GM12878 (cell line): ENCODE measurements at regions of chr12 and their contacts with region 1.

Region 1: DNA sequence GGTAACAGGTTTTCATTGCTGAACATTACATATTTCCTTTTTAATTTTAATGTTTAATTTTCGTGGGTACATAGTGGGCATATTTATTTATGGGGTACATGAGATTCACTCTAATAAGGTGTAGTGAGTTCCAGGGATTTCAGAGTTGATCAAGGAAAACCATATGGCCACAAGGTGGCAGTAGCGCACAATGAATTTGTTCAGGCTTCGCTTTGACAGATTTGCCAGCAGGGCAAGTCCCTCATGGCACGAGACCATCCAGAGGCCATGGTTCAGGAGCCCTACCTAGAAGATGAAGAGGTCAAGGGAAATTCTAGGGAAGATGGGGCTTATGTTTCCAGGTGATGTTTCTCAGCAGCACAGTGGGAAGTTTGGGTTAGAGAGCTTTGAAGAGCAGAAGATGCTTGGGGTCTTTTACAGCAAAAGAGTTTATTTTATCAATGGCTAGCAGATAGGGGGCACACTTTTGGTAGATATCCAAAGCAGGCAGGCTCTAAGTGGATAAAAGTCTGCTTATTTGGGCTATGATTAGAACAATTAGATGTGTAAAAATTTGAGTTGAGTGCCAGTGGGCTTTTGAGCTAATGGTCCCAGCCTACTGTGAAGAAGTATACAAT is 1004.4 kb downstream of the AACS start:
- DNase-seq: no peak
- ATAC-seq: peak; percentile 73
- H3K4me3 ChIP-seq: no peak overlapping the region
- H3K27ac ChIP-seq: no peak overlapping the region
- H3K4me1 ChIP-seq: no peaks in the 10 kb centered on the region
- H3K27me3 ChIP-seq: no peaks in the 10 kb centered on the region
- CTCF ChIP-seq: peak; percentile 45 to 63 (median 61); a peak in 5 of 6 replicates
- EP300 ChIP-seq: no peak
- POLR2A ChIP-seq: no peak
- RAD21 ChIP-seq: peak; percentile 78

Region 2: DNA sequence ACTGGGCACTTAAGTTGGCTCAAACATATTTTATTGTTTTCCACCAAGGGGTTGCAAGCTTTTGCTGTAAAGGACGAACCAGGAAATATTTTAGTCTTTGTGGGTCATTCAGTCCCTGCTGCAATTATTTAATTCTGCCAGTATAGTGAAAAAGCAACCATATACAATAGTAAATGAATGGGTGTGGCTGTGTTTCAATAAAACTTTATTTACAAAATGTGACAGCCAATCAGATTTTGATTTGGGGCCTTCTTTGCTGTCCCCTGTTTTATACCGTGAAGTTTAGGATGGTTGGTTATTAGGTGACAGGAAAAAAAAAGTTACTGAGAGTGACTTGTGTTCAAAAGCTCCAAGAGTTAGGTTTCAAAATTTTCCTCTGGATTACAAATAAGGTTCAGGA is 48.0 kb before region 1 on chr12:
- CTCF ChIA-PET with region 1: no interaction called
- POLR2A ChIA-PET with region 1: no interaction called
- RAD21 ChIA-PET with region 1: no interaction called
- SMC1A ChIA-PET with region 1: no interaction called
- in situ Hi-C with region 1: no loop called
- intact Hi-C with region 1: no loop called
- DNase-seq: no peak
- ATAC-seq: no peak
- H3K4me3 ChIP-seq: no peak overlapping the region
- H3K27ac ChIP-seq: no peak overlapping the region
- H3K4me1 ChIP-seq: no peaks in the 10 kb centered on the region
- H3K27me3 ChIP-seq: no peaks in the 10 kb centered on the region
- CTCF ChIP-seq: no peak
- EP300 ChIP-seq: no peak
- POLR2A ChIP-seq: no peak
- RAD21 ChIP-seq: no peak

Region 3: DNA sequence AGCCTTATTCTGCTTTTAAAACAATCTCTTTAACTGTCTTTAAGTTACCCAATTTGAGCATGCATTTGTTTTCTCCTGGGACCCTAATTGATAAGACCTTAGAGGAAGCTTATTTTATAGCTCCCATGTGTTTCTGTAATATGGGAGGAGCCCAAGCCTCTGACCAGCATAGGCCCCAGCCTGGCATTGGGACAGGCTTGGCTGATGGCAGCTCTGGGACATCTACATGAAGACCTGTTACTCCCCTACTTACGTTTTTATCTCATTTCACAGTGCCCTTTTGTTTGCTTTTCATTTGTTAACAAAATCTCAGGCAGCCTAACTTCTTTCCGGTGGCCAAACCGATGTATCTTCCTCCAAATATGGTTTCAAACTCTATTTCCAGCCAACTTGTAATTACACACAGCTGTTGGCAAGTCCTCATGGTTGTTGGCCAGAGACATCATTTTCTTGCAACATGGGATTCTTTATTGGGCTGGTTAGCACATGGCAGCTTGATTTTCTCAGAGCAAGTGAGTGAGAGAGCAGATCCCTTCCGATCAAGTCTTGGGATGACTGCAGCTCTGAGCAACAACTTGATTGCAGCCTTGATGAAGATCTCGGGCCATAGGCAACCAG is 113.1 kb after region 1 on chr12:
- CTCF ChIA-PET with region 1: no interaction called
- POLR2A ChIA-PET with region 1: no interaction called
- RAD21 ChIA-PET with region 1: no interaction called
- SMC1A ChIA-PET with region 1: no interaction called
- in situ Hi-C with region 1: no loop called
- intact Hi-C with region 1: no loop called
- DNase-seq: no peak
- ATAC-seq: no peak
- H3K4me3 ChIP-seq: no peak overlapping the region
- H3K27ac ChIP-seq: no peak overlapping the region
- H3K4me1 ChIP-seq: no peaks in the 10 kb centered on the region
- H3K27me3 ChIP-seq: no peaks in the 10 kb centered on the region
- CTCF ChIP-seq: no peak
- EP300 ChIP-seq: no peak
- POLR2A ChIP-seq: no peak
- RAD21 ChIP-seq: no peak

Region 4: DNA sequence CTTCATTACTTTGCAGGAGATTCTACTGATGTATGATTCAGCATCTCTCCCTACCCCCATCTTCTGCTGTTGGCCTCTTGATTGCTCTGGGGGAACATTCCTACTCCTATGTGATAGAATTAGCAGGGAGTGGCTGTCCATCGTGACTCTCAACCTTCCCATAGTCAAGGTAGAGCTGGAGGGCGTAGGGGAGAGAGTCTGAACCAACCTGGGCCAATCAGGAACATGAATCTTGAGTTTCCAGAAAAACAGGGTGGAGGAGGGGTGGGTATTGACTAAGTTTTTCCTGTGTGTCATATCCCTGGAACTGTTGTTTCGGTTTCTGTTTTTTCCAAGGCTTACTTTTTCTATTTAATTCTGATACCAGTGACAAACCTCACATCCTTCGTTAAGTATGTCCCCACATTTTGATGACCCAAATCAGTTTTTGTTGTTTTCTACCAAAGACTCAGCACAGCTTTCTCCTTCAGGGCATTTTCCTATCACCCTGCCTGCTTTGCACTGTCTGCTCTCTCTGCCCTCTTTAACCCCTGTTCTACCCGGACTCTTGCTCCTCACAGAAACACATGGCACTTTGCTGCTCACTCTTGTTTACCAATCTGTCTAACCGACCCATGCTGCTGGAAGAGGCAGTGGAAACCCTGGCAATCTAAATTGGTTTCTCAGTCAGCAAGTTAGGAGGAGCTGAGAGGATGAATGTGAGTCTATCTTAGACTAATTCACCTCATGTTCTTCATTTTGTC is 423.9 kb after region 1 on chr12:
- CTCF ChIA-PET with region 1: no interaction called
- POLR2A ChIA-PET with region 1: no interaction called
- RAD21 ChIA-PET with region 1: no interaction called
- SMC1A ChIA-PET with region 1: no interaction called
- in situ Hi-C with region 1: no loop called
- intact Hi-C with region 1: no loop called
- DNase-seq: no peak
- ATAC-seq: no peak
- H3K4me3 ChIP-seq: no peak overlapping the region
- H3K27ac ChIP-seq: no peak overlapping the region
- H3K4me1 ChIP-seq: no peaks in the 10 kb centered on the region
- H3K27me3 ChIP-seq: no peaks in the 10 kb centered on the region
- CTCF ChIP-seq: no peak
- EP300 ChIP-seq: no peak
- POLR2A ChIP-seq: no peak
- RAD21 ChIP-seq: no peak

Region 5: GRCh38 chr12:126747530-126748149 is 678.0 kb after region 1 on chr12:
- CTCF ChIA-PET with region 1: interaction called, 11 read pairs
- POLR2A ChIA-PET with region 1: no interaction called
- RAD21 ChIA-PET with region 1: interaction called, 4 read pairs
- SMC1A ChIA-PET with region 1: interaction called, 6 read pairs
- in situ Hi-C with region 1: no loop called
- intact Hi-C with region 1: loop called (anchors 5 kb)
- DNase-seq: no peak
- ATAC-seq: peak; percentile 73
- H3K4me3 ChIP-seq: no peak overlapping the region
- H3K27ac ChIP-seq: no peak overlapping the region
- H3K4me1 ChIP-seq: no peaks in the 10 kb centered on the region
- H3K27me3 ChIP-seq: no peaks in the 10 kb centered on the region
- CTCF ChIP-seq: peak; percentile 55 to 76 (median 65)
- EP300 ChIP-seq: no peak
- POLR2A ChIP-seq: no peak
- RAD21 ChIP-seq: peak; percentile 40

Region 6: GRCh38 chr12:126874427-126875026 is 804.9 kb after region 1 on chr12:
- CTCF ChIA-PET with region 1: interaction called, 7 read pairs
- POLR2A ChIA-PET with region 1: no interaction called
- RAD21 ChIA-PET with region 1: interaction called, 4 read pairs
- SMC1A ChIA-PET with region 1: interaction called, 3 read pairs
- in situ Hi-C with region 1: loop called (anchors 5 kb)
- intact Hi-C with region 1: loop called (anchors 1 kb)
- DNase-seq: peak; percentile 1
- ATAC-seq: peak; percentile 99
- H3K4me3 ChIP-seq: no peak overlapping the region
- H3K27ac ChIP-seq: no peak overlapping the region
- H3K4me1 ChIP-seq: no peaks in the 10 kb centered on the region
- H3K27me3 ChIP-seq: no peaks in the 10 kb centered on the region
- CTCF ChIP-seq: peak; percentile 87 to 90 (median 88)
- EP300 ChIP-seq: no peak
- POLR2A ChIP-seq: no peak
- RAD21 ChIP-seq: peak; percentile 85

Region 7: GRCh38 chr12:127381048-127381668 is 1311.5 kb after region 1 on chr12:
- CTCF ChIA-PET with region 1: interaction called, 4 read pairs
- POLR2A ChIA-PET with region 1: no interaction called
- RAD21 ChIA-PET with region 1: no interaction called
- SMC1A ChIA-PET with region 1: no interaction called
- in situ Hi-C with region 1: loop called (anchors 10 kb)
- intact Hi-C with region 1: loop called (anchors 1 kb)
- DNase-seq: no peak
- ATAC-seq: peak; percentile 87
- H3K4me3 ChIP-seq: no peak overlapping the region
- H3K27ac ChIP-seq: no peak overlapping the region
- H3K4me1 ChIP-seq: no peaks in the 10 kb centered on the region
- H3K27me3 ChIP-seq: no peaks in the 10 kb centered on the region
- CTCF ChIP-seq: peak; percentile 57 to 81 (median 70)
- EP300 ChIP-seq: no peak
- POLR2A ChIP-seq: no peak
- RAD21 ChIP-seq: peak; percentile 74